CD8-positive, alpha-beta memory T cell (primary cell): ENCODE measurements at regions of chr1 and their contacts with region 1.

Region 1: GRCh38 chr1:226062558-226063223 is at the start of gene H3-3A:
- DNase-seq: peak; percentile 96 to 99 (median 97)
- H3K4me3 ChIP-seq: peak within 1 kb of the TSS; percentile 91
- H3K4me3 Mint-ChIP-seq: peak within 1 kb of the TSS; percentile 99 to 100 (median 100)
- H3K27ac ChIP-seq: peak within 1 kb of the TSS; percentile 96
- H3K27ac Mint-ChIP-seq: peak within 1 kb of the TSS; percentile 95 to 100 (median 98)
- H3K4me1 ChIP-seq: peaks cover 48% of the 10 kb centered on the region
- H3K4me1 Mint-ChIP-seq: peaks cover 48 to 64% (median 50%) of the 10 kb centered on the region in 3 donors
- H3K27me3 ChIP-seq: no peaks in the 10 kb centered on the region
- H3K27me3 Mint-ChIP-seq: no peaks in the 10 kb centered on the region
- total RNA-seq, gene H3-3A: 356 to 372 TPM

Region 2: DNA sequence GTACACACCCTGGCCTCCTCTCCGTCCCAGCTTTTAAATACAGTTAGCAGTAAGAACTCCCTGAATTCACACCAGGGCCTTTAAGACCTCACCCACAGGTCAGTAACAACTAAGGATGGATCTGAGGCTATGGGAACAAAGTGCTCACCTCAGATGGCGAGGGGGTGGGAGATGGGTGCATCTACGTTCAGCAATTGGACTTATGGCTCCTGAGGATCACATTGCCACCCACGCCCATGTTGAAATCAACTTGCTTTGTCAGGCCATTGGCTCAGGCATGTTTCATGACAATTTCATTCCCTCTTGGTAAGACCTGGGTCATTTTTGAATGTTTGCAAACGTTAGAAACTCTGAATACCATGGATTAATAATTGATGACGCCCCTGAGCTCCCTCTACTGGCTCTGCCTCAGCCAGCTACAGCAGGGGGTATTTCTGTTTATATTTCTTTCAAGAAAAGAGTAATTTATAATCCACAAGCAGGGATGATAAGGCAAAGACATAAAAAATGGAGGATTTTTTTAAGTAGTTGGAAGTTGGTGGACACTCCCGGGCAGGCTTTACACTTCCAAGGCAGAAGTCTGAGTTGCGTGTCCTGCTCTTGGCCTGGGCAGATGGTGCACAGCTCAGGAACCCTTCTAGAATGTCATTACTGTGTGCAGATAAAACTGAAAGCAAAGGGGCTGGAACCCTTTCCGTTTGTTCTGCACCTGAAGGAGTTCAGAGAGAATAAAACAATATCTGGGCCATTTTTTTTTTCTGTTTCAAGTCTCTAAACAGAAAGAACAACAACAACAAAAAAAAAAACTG is 621.2 kb before region 1 on chr1:
- CTCF ChIA-PET with region 1: no interaction called
- POLR2A ChIA-PET with region 1: interaction called, 10 read pairs
- DNase-seq: no peak
- H3K4me3 ChIP-seq: no peak overlapping the region
- H3K4me3 Mint-ChIP-seq: peak overlapping the region in 5 of 7 donors; percentile 33 to 66 (median 51)
- H3K27ac ChIP-seq: no peak overlapping the region
- H3K27ac Mint-ChIP-seq: peak overlapping the region; percentile 55 to 96 (median 75)
- H3K4me1 ChIP-seq: peaks cover 52% of the 10 kb centered on the region
- H3K4me1 Mint-ChIP-seq: peaks cover 46 to 56% (median 55%) of the 10 kb centered on the region in 3 donors
- H3K27me3 ChIP-seq: no peaks in the 10 kb centered on the region
- H3K27me3 Mint-ChIP-seq: no peaks in the 10 kb centered on the region

Region 3: GRCh38 chr1:225777583-225778336 is 284.9 kb before region 1 on chr1 and contains the start of gene SRP9:
- CTCF ChIA-PET with region 1: no interaction called
- POLR2A ChIA-PET with region 1: interaction called, 15 read pairs
- DNase-seq: peak; percentile 98 to 99 (median 99)
- H3K4me3 ChIP-seq: peak within 1 kb of the TSS; percentile 95
- H3K4me3 Mint-ChIP-seq: no peak within 1 kb of the TSS
- H3K27ac ChIP-seq: peak within 1 kb of the TSS; percentile 99
- H3K27ac Mint-ChIP-seq: no peak within 1 kb of the TSS
- H3K4me1 ChIP-seq: peaks cover 50% of the 10 kb centered on the region
- H3K4me1 Mint-ChIP-seq: peaks cover 34 to 49% (median 35%) of the 10 kb centered on the region in 3 donors
- H3K27me3 ChIP-seq: no peaks in the 10 kb centered on the region
- H3K27me3 Mint-ChIP-seq: no peaks in the 10 kb centered on the region
- total RNA-seq, gene SRP9: 339 TPM

Region 4: GRCh38 chr1:225987491-225988316 is 75.0 kb before region 1 on chr1:
- CTCF ChIA-PET with region 1: interaction called, 10 read pairs
- POLR2A ChIA-PET with region 1: interaction called, 5 read pairs
- DNase-seq: peak in 1 of 5 donors; percentile 49
- H3K4me3 ChIP-seq: no peak overlapping the region
- H3K4me3 Mint-ChIP-seq: no peak overlapping the region
- H3K27ac ChIP-seq: no peak overlapping the region
- H3K27ac Mint-ChIP-seq: peak overlapping the region in 4 of 8 donors; percentile 23 to 86 (median 58)
- H3K4me1 ChIP-seq: peaks cover 15% of the 10 kb centered on the region
- H3K4me1 Mint-ChIP-seq: peaks cover 28 to 41% (median 39%) of the 10 kb centered on the region in 3 donors
- H3K27me3 ChIP-seq: no peaks in the 10 kb centered on the region
- H3K27me3 Mint-ChIP-seq: no peaks in the 10 kb centered on the region

Region 5: GRCh38 chr1:226017070-226017469 is 45.6 kb before region 1 on chr1:
- CTCF ChIA-PET with region 1: no interaction called
- POLR2A ChIA-PET with region 1: no interaction called
- DNase-seq: no peak
- H3K4me3 ChIP-seq: no peak overlapping the region
- H3K4me3 Mint-ChIP-seq: no peak overlapping the region
- H3K27ac ChIP-seq: no peak overlapping the region
- H3K27ac Mint-ChIP-seq: no peak overlapping the region
- H3K4me1 ChIP-seq: no peaks in the 10 kb centered on the region
- H3K4me1 Mint-ChIP-seq: no peaks in the 10 kb centered on the region
- H3K27me3 ChIP-seq: no peaks in the 10 kb centered on the region
- H3K27me3 Mint-ChIP-seq: peaks cover 0 to 7% of the 10 kb centered on the region in 2 donors

Region 6: GRCh38 chr1:226027538-226028217 is 35.0 kb before region 1 on chr1:
- CTCF ChIA-PET with region 1: no interaction called
- POLR2A ChIA-PET with region 1: no interaction called
- DNase-seq: no peak
- H3K4me3 ChIP-seq: no peak overlapping the region
- H3K4me3 Mint-ChIP-seq: no peak overlapping the region
- H3K27ac ChIP-seq: no peak overlapping the region
- H3K27ac Mint-ChIP-seq: no peak overlapping the region
- H3K4me1 ChIP-seq: no peaks in the 10 kb centered on the region
- H3K4me1 Mint-ChIP-seq: peaks cover 5 to 7% (median 5%) of the 10 kb centered on the region in 3 donors
- H3K27me3 ChIP-seq: no peaks in the 10 kb centered on the region
- H3K27me3 Mint-ChIP-seq: peaks cover 0 to 5% of the 10 kb centered on the region in 2 donors

Region 7: GRCh38 chr1:226074046-226074445 is 11.4 kb after region 1 on chr1:
- CTCF ChIA-PET with region 1: interaction called, 26 read pairs
- POLR2A ChIA-PET with region 1: interaction called, 8 read pairs
- DNase-seq: no peak
- H3K4me3 ChIP-seq: no peak overlapping the region
- H3K4me3 Mint-ChIP-seq: peak overlapping the region in 1 of 7 donors; percentile 4
- H3K27ac ChIP-seq: no peak overlapping the region
- H3K27ac Mint-ChIP-seq: peak overlapping the region in 4 of 8 donors; percentile 12 to 72 (median 32)
- H3K4me1 ChIP-seq: peaks cover 10% of the 10 kb centered on the region
- H3K4me1 Mint-ChIP-seq: peaks cover 21 to 32% (median 26%) of the 10 kb centered on the region in 3 donors
- H3K27me3 ChIP-seq: no peaks in the 10 kb centered on the region
- H3K27me3 Mint-ChIP-seq: no peaks in the 10 kb centered on the region

Region 8: DNA sequence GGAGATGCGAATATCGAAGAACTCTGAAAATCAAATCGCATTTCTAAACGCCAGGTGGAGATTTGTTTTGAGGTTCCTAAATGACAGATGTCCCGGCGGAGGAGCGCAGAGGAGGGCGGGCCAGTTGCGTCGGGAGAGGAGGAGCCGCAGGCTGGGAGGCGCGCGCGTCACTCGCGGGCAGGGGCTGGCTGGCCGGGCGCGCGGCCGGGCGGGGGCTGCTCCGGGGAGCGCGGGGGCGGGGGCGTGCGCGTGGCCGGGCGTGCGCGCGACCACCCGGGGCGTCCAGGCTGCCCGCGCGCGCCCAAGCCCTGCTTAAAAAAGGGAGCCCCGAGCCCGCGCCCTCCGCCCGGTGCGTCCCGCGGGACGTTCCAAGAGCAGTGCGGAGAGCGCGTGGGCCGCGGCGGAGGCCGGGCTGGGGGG is 47.1 kb after region 1 on chr1:
- CTCF ChIA-PET with region 1: interaction called, 17 read pairs
- POLR2A ChIA-PET with region 1: interaction called, 17 read pairs
- DNase-seq: peak; percentile 64 to 81 (median 73)
- H3K4me3 ChIP-seq: peak overlapping the region; percentile 56
- H3K4me3 Mint-ChIP-seq: peak overlapping the region; percentile 88 to 94 (median 92)
- H3K27ac ChIP-seq: peak overlapping the region; percentile 79
- H3K27ac Mint-ChIP-seq: peak overlapping the region; percentile 79 to 94 (median 90)
- H3K4me1 ChIP-seq: peaks cover 10% of the 10 kb centered on the region
- H3K4me1 Mint-ChIP-seq: peaks cover 12 to 20% (median 13%) of the 10 kb centered on the region in 3 donors
- H3K27me3 ChIP-seq: no peaks in the 10 kb centered on the region
- H3K27me3 Mint-ChIP-seq: peaks cover 0 to 3% of the 10 kb centered on the region in 2 donors

Region 9: DNA sequence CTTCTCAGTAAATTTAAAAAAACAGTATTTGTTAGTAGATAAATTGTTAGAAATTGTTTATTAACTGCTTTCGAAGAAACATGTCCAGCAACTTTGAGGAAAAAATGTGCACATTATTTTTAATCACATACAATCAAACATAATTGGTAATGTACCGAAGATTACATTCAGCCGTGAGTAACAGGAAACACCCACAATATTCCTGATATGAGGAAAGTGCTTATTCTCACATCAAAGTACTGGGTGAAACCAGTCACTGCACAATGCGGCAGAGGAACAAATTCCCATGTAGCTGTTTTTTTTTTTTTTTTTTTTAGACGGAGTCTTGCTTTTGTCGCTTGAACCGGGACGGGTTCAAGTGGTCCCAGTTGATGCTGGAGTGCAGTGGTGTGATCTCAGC is 114.2 kb after region 1 on chr1:
- CTCF ChIA-PET with region 1: no interaction called
- POLR2A ChIA-PET with region 1: no interaction called
- DNase-seq: no peak
- H3K4me3 ChIP-seq: no peak overlapping the region
- H3K4me3 Mint-ChIP-seq: no peak overlapping the region
- H3K27ac ChIP-seq: no peak overlapping the region
- H3K27ac Mint-ChIP-seq: no peak overlapping the region
- H3K4me1 ChIP-seq: peaks cover 9% of the 10 kb centered on the region
- H3K4me1 Mint-ChIP-seq: peaks cover 44 to 81% (median 60%) of the 10 kb centered on the region in 3 donors
- H3K27me3 ChIP-seq: no peaks in the 10 kb centered on the region
- H3K27me3 Mint-ChIP-seq: no peaks in the 10 kb centered on the region

Region 10: GRCh38 chr1:226201029-226201593 is 138.4 kb after region 1 on chr1:
- CTCF ChIA-PET with region 1: interaction called, 13 read pairs
- POLR2A ChIA-PET with region 1: interaction called, 3 read pairs
- DNase-seq: no peak
- H3K4me3 ChIP-seq: no peak overlapping the region
- H3K4me3 Mint-ChIP-seq: no peak overlapping the region
- H3K27ac ChIP-seq: no peak overlapping the region
- H3K27ac Mint-ChIP-seq: no peak overlapping the region
- H3K4me1 ChIP-seq: no peaks in the 10 kb centered on the region
- H3K4me1 Mint-ChIP-seq: peaks cover 0 to 3% (median 0%) of the 10 kb centered on the region in 3 donors
- H3K27me3 ChIP-seq: no peaks in the 10 kb centered on the region
- H3K27me3 Mint-ChIP-seq: peaks cover 3 to 16% of the 10 kb centered on the region in 2 donors